Activated CD4-positive, alpha-beta memory T cell treated with anti-CD3 and anti-CD28 coated beads for 36 hours (primary cell): ENCODE measurements at regions of chr1 and their contacts with region 1.

Region 1: DNA sequence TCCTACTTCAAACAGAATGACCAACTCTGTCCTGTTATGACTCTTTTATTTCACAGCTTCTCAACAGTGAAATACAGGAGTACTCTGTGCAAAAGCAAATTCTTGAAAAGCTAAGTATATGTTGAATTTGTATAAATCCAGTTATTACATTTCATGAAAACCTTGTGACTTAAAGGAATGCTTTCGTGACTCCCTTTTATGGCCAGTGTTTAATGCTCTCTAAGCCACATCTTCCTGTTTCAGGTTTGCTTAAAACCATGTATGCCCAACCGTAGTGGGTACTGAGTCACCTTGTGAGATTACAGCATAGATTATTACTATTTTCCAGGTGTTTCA is 40.2 kb upstream of the KIF1B start:
- DNase-seq: peak; percentile 35
- H3K4me3 Mint-ChIP-seq: no peak overlapping the region
- H3K27ac Mint-ChIP-seq: peak overlapping the region; percentile 83
- H3K4me1 Mint-ChIP-seq: peaks cover 40% of the 10 kb centered on the region
- H3K27me3 Mint-ChIP-seq: no peaks in the 10 kb centered on the region

Region 2: GRCh38 chr1:9900142-9901043 is 269.8 kb before region 1 on chr1:
- CTCF ChIA-PET with region 1: interaction called, 3 read pairs
- POLR2A ChIA-PET with region 1: interaction called, 5 read pairs
- intact Hi-C with region 1: loop called (anchors 1 kb)
- DNase-seq: no peak
- H3K4me3 Mint-ChIP-seq: no peak overlapping the region
- H3K27ac Mint-ChIP-seq: no peak overlapping the region
- H3K4me1 Mint-ChIP-seq: peaks cover 30% of the 10 kb centered on the region
- H3K27me3 Mint-ChIP-seq: no peaks in the 10 kb centered on the region

Region 3: DNA sequence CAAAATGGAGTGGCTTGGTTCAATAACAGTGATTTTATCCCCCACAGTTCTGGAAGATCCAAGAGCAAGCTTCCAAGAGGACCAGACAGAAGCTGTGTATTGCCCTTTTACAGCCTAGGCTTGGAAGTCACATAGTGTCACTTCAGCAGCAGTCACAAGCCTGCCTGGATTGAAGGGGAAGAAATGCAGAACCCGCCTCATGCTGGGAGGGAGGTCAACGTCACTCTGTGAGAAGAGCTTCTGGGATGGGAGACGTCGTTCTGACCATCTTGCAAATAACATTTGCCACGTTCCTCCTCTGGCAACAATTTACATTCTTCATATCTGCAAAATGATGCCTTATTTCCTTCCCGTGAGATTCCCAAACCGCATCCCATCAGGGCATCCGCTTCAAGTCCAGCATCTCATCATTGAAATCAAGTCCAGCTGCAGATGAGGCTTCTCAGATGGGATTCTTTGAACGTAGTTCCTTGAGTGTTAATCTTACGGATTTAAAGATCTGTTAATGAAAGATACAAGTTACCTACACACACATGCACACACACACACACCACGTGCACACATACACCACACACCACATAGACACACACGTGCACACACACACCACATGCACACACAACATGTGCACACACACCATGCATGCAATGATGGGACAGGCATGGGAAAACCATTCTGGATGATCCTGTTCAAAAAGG is 16.3 kb after region 1 on chr1:
- CTCF ChIA-PET with region 1: no interaction called
- POLR2A ChIA-PET with region 1: no interaction called
- intact Hi-C with region 1: loop called (anchors 2 kb)
- DNase-seq: no peak
- H3K4me3 Mint-ChIP-seq: no peak overlapping the region
- H3K27ac Mint-ChIP-seq: no peak overlapping the region
- H3K4me1 Mint-ChIP-seq: peaks cover 5% of the 10 kb centered on the region
- H3K27me3 Mint-ChIP-seq: no peaks in the 10 kb centered on the region

Region 4: DNA sequence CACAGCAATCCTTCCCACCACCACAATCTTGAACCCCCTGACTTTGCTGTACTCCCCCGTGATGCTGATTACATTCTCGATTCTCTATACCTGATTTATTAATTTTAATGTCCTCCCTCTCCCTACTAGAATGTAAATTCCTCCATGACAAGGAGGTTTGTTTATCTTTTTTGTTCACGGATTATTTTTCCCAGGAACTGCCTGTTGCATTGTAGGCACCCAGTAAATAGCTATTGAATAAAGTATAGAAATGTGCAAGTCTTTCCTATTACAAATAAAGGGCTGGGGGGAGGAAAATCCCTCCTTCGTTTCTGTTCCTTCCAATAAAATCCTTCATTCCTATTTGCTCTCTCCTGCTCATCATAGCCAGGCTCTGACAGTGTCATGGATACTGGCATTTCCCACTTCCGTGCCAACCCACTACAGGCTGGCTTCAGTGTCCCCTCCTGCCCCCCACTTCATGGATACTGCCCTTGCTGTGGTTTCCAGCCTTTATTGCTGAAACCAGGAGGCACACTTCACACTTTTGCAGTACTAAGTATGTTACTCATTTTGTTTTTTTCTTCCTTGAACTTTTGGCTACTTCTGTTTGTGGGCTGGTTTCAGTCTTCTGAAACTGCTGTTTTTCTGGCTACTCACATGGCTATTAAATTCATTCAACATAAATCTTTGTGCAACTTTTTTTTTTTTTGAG is 47.7 kb after region 1 on chr1:
- CTCF ChIA-PET with region 1: no interaction called
- POLR2A ChIA-PET with region 1: no interaction called
- intact Hi-C with region 1: loop called (anchors 2 kb)
- DNase-seq: peak; percentile 29
- H3K4me3 Mint-ChIP-seq: no peak overlapping the region
- H3K27ac Mint-ChIP-seq: no peak overlapping the region
- H3K4me1 Mint-ChIP-seq: peaks cover 38% of the 10 kb centered on the region
- H3K27me3 Mint-ChIP-seq: no peaks in the 10 kb centered on the region